Natural killer cell (primary cell): ENCODE measurements at regions of chr17 and their contacts with region 1.

Region 1: GRCh38 chr17:48441231-48441711 is 11.3 kb upstream of the SKAP1 start:
- DNase-seq: peak; percentile 22 to 89
- ATAC-seq: peak; percentile 58 to 78 (median 77)
- H3K4me3 ChIP-seq: no peak overlapping the region
- H3K4me3 Mint-ChIP-seq: peak overlapping the region; percentile 86
- H3K27ac ChIP-seq: peak overlapping the region; percentile 87
- H3K27ac Mint-ChIP-seq: peak overlapping the region; percentile 96 to 98
- H3K4me1 ChIP-seq: peaks cover 96% of the 10 kb centered on the region
- H3K4me1 Mint-ChIP-seq: peaks cover 86 to 87% of the 10 kb centered on the region in 2 donors
- H3K27me3 ChIP-seq: no peaks in the 10 kb centered on the region
- H3K27me3 Mint-ChIP-seq: no peaks in the 10 kb centered on the region
- CTCF ChIP-seq: no peak

Region 2: DNA sequence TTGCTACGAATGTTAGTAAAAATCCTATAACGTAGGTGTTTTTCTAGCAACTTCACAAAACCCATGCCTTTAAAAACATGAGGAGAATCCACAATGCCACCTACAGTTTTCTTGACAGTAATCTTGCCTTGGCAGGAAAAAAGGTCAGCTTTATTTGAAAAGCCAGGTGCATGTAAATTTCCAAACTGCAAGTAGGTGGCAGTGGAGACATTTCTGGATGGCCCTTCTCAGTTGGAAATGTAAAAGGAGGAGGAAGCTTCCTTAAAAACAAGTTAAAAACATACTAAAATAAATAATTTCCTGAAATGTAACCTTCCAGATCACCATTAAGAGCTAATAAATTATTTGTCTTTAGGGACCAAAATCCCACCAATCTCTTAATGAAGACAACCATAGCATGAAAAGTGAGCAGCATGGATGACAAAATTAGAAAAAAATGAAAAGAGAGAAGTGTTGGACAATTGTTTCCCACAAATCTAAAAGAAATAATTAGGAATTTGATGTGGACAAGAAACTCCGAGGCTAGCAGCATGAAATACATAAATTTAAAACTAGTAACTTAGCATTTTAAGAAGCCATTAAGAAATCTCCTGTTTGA is 181.5 kb before region 1 on chr17:
- intact Hi-C with region 1: loop called (anchors 10 kb)
- DNase-seq: peak in 1 of 2 donors; percentile 34
- ATAC-seq: no peak
- H3K4me3 ChIP-seq: no peak overlapping the region
- H3K4me3 Mint-ChIP-seq: no peak overlapping the region
- H3K27ac ChIP-seq: no peak overlapping the region
- H3K27ac Mint-ChIP-seq: peak overlapping the region; percentile 31 to 59
- H3K4me1 ChIP-seq: peaks cover 2% of the 10 kb centered on the region
- H3K4me1 Mint-ChIP-seq: peaks cover 20 to 47% of the 10 kb centered on the region in 2 donors
- H3K27me3 ChIP-seq: no peaks in the 10 kb centered on the region
- H3K27me3 Mint-ChIP-seq: no peaks in the 10 kb centered on the region
- CTCF ChIP-seq: peak; percentile 18

Region 3: DNA sequence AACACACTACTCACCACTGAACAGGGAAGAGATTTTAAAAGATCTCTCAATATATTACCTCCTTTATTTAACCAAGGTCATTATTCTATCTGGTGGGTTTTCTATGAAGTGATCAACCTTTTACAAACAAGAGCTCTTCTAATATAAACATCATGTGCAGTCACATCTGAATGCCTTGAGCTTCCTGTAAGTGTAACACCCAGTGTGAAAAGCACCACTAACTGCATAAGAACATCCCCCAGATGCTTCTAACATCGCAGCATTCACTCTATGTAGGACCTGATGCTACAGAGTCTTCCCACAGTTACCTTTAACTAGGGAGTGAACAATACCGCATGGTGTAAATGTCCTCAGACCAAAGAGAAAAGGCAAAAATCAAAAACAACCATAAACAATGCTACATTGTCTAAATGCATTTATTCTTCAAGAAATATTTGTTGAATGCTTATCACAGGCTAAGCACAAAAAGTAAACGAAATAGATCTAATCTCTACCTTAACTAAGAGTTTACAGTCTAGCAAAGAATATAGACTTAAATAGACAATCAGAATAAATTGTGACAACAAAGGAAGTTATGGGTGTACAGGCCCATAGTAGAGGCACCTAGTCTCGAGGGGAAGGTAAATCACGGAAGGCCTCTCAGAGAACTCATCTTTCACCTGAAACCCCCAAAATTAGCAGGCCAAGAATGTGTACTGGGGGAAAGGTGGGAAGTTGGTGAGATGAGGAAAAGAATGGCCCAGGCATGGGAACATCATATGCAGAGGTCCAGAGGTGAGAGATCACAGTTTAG is 27.5 kb before region 1 on chr17:
- intact Hi-C with region 1: loop called (anchors 1 kb)
- DNase-seq: peak in 1 of 2 donors; percentile 57
- ATAC-seq: peak; percentile 83 to 91 (median 90)
- H3K4me3 ChIP-seq: no peak overlapping the region
- H3K4me3 Mint-ChIP-seq: peak overlapping the region; percentile 82
- H3K27ac ChIP-seq: peak overlapping the region; percentile 74
- H3K27ac Mint-ChIP-seq: peak overlapping the region; percentile 87 to 95
- H3K4me1 ChIP-seq: peaks cover 29% of the 10 kb centered on the region
- H3K4me1 Mint-ChIP-seq: peaks cover 60 to 69% of the 10 kb centered on the region in 2 donors
- H3K27me3 ChIP-seq: no peaks in the 10 kb centered on the region
- H3K27me3 Mint-ChIP-seq: no peaks in the 10 kb centered on the region
- CTCF ChIP-seq: no peak

Region 4: DNA sequence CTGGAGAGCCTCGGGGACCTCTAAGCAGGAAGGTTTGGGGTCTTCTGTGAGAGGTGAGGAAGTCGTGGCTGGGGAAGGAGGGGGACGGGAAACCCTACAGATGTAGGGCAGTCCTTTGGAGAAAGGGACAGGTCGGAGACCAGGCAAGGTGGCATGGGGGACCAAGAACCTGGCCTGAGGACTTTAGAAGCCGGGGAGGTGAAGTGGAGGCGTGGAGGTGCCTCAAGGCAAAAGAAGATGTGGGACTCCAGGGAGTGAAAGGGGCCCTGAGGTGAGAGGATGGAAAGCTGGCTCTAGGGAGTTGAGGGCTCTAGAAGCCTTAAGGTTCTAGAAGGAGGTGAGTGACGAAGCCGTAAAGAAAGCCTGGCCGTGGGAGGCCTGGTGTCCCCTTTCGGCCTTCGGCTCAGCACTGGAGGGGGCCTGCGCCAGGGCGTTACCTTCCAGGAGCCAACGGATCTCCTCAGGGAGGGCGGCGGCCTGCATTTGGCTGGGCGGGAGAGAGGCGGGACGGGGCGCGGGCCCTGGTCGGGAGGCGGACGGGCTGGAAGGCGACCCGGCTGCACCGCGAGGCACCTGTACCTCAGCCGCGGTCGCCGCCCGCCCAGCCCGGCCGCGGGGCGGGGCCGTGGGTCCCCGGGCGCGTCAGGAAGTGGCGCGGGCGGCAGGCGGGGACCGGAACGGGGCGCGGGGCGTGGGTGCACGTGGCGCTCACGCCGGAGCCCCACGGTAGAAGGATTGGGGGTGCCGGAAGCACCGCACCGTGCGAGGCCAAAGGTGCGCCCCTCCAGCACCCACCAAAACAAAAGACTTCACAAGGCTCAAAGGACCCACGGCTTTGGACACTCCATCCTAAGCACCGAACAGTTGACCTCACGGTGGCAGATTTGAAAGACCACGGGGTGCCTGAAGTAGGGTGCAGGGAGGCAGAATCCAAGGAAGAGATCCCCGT is 11.4 kb before region 1 on chr17 and contains the start of gene SKAP1:
- intact Hi-C with region 1: loop called (anchors 1 kb)
- DNase-seq: peak; percentile 65 to 83
- ATAC-seq: peak; percentile 59 to 69 (median 67)
- H3K4me3 ChIP-seq: peak within 1 kb of the TSS; percentile 97
- H3K4me3 Mint-ChIP-seq: peak within 1 kb of the TSS; percentile 98
- H3K27ac ChIP-seq: peak within 1 kb of the TSS; percentile 94
- H3K27ac Mint-ChIP-seq: peak within 1 kb of the TSS; percentile 100
- H3K4me1 ChIP-seq: peaks cover 24% of the 10 kb centered on the region
- H3K4me1 Mint-ChIP-seq: peaks cover 67 to 76% of the 10 kb centered on the region in 2 donors
- H3K27me3 ChIP-seq: no peaks in the 10 kb centered on the region
- H3K27me3 Mint-ChIP-seq: peaks cover 0 to 6% of the 10 kb centered on the region in 2 donors
- CTCF ChIP-seq: no peak
- total RNA-seq, gene SKAP1: 168 to 227 (median 190) TPM

Region 5: DNA sequence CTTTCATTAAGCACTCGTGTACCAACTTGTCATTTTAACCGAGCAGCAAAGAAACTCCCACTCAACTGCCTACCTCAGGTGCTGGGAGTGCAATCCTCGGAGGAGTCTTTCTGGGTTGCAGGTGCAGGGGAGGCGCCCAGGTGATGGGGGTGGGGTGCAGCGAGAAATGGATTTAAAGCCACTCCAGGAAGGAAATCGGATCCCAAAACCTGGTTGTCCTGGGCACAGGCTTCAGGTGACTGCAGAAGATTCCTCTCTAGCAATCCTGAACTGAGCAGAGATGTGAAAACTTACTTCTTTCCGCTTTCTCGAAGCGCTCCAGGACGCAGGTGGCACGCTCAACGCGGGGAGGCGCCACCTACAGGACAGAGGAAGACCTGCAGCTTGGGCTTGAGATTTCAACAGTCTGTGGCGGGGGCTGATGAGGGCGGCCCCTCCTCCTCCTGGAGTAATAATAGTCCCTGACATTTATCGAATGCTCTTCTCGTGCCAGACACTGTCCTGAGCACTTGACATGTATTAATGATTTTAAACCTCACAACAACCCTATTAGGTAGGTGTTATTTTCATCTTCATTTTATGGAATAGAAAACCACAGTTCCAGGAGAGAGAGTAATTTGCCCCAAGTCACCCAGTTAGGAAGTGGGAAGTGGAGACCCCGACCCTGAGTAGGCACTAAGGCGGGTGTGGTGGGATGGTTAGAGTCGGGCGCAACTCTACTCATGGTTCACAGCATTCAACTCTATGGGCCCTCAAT is 16.0 kb after region 1 on chr17:
- intact Hi-C with region 1: loop called (anchors 1 kb)
- DNase-seq: peak; percentile 67 to 93
- ATAC-seq: peak; percentile 88 to 90 (median 90)
- H3K4me3 ChIP-seq: no peak overlapping the region
- H3K4me3 Mint-ChIP-seq: peak overlapping the region; percentile 72
- H3K27ac ChIP-seq: no peak overlapping the region
- H3K27ac Mint-ChIP-seq: peak overlapping the region; percentile 87 to 91
- H3K4me1 ChIP-seq: peaks cover 52% of the 10 kb centered on the region
- H3K4me1 Mint-ChIP-seq: peaks cover 49 to 50% of the 10 kb centered on the region in 2 donors
- H3K27me3 ChIP-seq: no peaks in the 10 kb centered on the region
- H3K27me3 Mint-ChIP-seq: no peaks in the 10 kb centered on the region
- CTCF ChIP-seq: peak; percentile 98

Region 6: DNA sequence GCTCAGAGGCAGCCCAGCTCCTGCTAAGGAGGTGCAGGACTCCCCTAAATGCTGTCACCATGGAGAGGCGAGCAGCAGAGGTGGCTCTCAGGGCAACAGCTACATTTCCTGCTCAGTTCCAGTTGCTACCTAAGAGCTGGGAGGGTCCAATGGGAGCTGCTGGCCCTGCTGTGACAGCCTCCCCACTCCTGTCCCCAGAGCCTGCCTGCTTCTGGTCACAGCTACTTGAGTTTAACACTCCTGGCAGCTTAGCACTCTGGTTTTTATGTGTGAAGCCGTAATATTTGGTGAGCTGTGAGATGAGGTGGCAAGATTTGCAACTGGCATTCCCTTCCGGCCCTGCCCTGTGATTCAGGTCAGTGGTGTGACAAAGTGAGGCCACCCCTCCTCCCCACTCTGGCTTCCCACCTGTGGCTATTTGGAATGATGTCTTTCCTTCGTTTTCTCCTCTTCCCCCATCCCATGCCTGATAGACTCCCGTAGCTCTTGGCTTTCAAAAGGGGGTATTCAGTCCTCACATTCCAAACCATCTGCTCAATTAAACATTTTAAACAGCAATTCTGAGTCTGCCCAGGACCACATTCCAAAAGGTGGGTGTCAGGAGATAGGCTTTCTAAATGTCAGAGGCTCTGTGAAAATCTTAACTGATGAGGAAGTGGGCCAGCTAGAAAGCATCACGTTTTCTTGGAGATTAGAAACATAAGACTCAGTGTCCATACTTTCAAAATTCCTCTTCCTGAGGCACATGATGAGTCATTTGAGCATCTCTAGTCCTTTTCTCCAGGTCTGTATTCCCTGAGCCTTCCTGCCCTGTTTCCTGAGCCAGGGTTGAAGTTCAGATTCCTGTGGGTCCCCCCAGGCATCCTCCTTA is 31.4 kb after region 1 on chr17:
- intact Hi-C with region 1: loop called (anchors 2 kb)
- DNase-seq: peak; percentile 58 to 70
- ATAC-seq: peak; percentile 92 to 96 (median 94)
- H3K4me3 ChIP-seq: no peak overlapping the region
- H3K4me3 Mint-ChIP-seq: peak overlapping the region; percentile 80
- H3K27ac ChIP-seq: peak overlapping the region; percentile 46
- H3K27ac Mint-ChIP-seq: peak overlapping the region; percentile 83 to 93
- H3K4me1 ChIP-seq: peaks cover 39% of the 10 kb centered on the region
- H3K4me1 Mint-ChIP-seq: peaks cover 31 to 57% of the 10 kb centered on the region in 2 donors
- H3K27me3 ChIP-seq: no peaks in the 10 kb centered on the region
- H3K27me3 Mint-ChIP-seq: no peaks in the 10 kb centered on the region
- CTCF ChIP-seq: no peak